Psoas muscle (tissue), 8 donors: ENCODE measurements at regions of chr7 and their contacts with region 1.

Region 1: GRCh38 chr7:122764020-122764419 is 61.3 kb upstream of the RNF148 start:
- DNase-seq: no peak
- ATAC-seq: no peak
- H3K4me3 ChIP-seq: no peak overlapping the region
- H3K27ac ChIP-seq: no peak overlapping the region
- H3K4me1 ChIP-seq: no peaks in the 10 kb centered on the region
- H3K27me3 ChIP-seq: no peaks in the 10 kb centered on the region
- CTCF ChIP-seq: no peak

Region 2: GRCh38 chr7:122412883-122413282 is 351.1 kb before region 1 on chr7:
- intact Hi-C with region 1: loop called in 1 of 2 experiments (anchors 10 kb)
- DNase-seq: no peak
- ATAC-seq: no peak
- H3K4me3 ChIP-seq: no peak overlapping the region
- H3K27ac ChIP-seq: no peak overlapping the region
- H3K4me1 ChIP-seq: no peaks in the 10 kb centered on the region
- H3K27me3 ChIP-seq: no peaks in the 10 kb centered on the region
- CTCF ChIP-seq: no peak

Region 3: GRCh38 chr7:122658856-122659255 is 105.2 kb before region 1 on chr7:
- intact Hi-C with region 1: no loop called
- DNase-seq: no peak
- ATAC-seq: no peak
- H3K4me3 ChIP-seq: no peak overlapping the region
- H3K27ac ChIP-seq: no peak overlapping the region
- H3K4me1 ChIP-seq: no peaks in the 10 kb centered on the region
- H3K27me3 ChIP-seq: no peaks in the 10 kb centered on the region
- CTCF ChIP-seq: no peak

Region 4: DNA sequence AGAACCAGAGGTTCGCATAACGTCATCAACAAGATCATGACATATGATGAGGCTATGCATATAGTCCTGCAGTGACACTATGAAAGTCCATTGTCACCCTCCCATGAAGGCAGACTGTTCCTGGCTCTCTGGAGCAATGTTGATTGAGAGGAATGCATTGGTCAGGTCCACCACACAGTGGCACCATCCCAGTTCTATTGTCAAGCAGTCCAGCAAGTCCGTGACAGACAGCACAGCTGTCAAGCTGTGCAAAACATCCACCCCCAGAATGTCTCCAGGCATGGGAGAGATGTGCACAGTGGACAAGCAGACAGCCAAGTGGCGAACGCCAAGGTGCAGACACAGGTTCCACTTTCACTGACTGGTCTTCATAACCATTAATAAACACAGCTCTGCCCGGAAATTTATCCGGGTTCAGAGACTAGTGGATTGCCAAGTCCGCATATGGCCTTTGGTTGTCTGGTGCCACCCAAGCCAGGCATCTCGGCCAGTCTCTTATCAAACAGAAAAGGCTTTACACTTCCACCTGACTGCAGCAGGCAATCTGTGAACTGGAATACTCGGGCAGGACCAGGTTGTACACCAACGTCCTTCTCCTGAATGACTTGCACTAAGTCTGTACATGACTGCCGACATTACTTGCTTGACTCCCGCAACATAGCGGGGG is 72.3 kb before region 1 on chr7:
- intact Hi-C with region 1: no loop called
- DNase-seq: no peak
- ATAC-seq: peak in 1 of 4 donors; percentile 70
- H3K4me3 ChIP-seq: no peak overlapping the region
- H3K27ac ChIP-seq: no peak overlapping the region
- H3K4me1 ChIP-seq: no peaks in the 10 kb centered on the region
- H3K27me3 ChIP-seq: no peaks in the 10 kb centered on the region
- CTCF ChIP-seq: no peak

Region 5: DNA sequence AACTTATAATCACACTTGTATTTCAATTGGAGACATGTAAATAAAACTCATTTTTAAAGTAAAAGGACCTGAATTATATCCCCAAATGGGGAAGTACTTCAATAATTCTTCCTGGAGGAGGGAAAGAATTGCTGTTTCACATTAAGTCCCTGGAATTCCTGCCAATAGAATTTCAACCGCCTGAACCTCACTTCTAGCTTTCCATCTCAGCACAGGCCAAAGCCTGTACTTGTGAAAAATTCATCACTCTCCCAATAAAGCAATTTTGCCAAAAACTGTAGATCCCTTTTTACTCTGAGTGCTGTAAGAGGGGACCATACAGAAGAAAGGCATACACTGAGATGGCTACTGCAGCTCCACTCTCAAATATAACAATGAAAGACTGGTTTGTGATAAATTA is 67.4 kb after region 1 on chr7:
- intact Hi-C with region 1: no loop called
- DNase-seq: no peak
- ATAC-seq: no peak
- H3K4me3 ChIP-seq: no peak overlapping the region
- H3K27ac ChIP-seq: no peak overlapping the region
- H3K4me1 ChIP-seq: no peaks in the 10 kb centered on the region
- H3K27me3 ChIP-seq: no peaks in the 10 kb centered on the region
- CTCF ChIP-seq: no peak